ENCODE measurements at regions of chr4 and their contacts with region 1.

Region 1: DNA sequence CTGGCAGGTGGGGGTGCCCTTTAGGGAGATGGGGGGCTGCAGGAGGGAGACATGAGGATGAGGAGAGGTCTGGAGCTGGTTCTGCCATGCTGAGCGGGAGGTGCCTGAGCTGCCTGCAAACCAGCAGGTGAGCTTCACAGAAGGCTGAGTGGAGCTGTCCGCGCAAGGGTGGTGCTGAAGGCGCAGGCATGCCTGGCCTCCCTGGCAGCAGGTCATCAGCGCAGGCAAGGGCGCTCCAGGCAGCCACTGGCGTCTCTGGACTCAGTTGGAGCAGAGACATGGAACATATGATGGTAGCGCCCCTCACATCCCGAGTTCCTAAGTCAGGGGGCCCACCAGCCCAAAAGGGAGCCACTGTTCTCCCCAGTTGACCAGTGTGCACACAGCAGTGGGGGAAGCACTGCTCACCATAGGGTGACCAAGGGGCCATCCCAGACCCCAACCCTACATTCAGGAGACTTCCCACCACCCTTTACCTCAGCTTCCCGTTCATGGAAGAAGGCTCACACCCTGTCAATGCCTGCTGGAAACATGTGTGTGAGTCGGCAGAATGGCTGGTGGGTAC is 25.9 kb downstream of the ADRA2C start:
- DNase-seq: peak; percentile 29
- H3K4me3 ChIP-seq: no peak overlapping the region
- H3K27ac ChIP-seq: no peak overlapping the region
- H3K4me1 ChIP-seq: no peaks in the 10 kb centered on the region
- H3K27me3 ChIP-seq: no peaks in the 10 kb centered on the region
- CTCF ChIP-seq: no peak

Region 2: GRCh38 chr4:3387943-3388361 is 404.1 kb before region 1 on chr4:
- CTCF ChIA-PET with region 1: no interaction called
- dilution Hi-C with region 1: no loop called
- in situ Hi-C with region 1: no loop called
- intact Hi-C with region 1: no loop called
- DNase-seq: peak; percentile 88
- H3K4me3 ChIP-seq: peak overlapping the region; percentile 73 to 85 (median 81)
- H3K27ac ChIP-seq: peak overlapping the region; percentile 83
- H3K4me1 ChIP-seq: peaks cover 33% of the 10 kb centered on the region
- H3K27me3 ChIP-seq: no peaks in the 10 kb centered on the region
- CTCF ChIP-seq: no peak

Region 3: GRCh38 chr4:3732076-3733028 is 59.7 kb before region 1 on chr4:
- CTCF ChIA-PET with region 1: no interaction called
- dilution Hi-C with region 1: loop called (anchors 10 kb)
- in situ Hi-C with region 1: no loop called
- intact Hi-C with region 1: no loop called
- DNase-seq: no peak
- H3K4me3 ChIP-seq: no peak overlapping the region
- H3K27ac ChIP-seq: no peak overlapping the region
- H3K4me1 ChIP-seq: no peaks in the 10 kb centered on the region
- H3K27me3 ChIP-seq: no peaks in the 10 kb centered on the region
- CTCF ChIP-seq: no peak

Region 4: GRCh38 chr4:3868211-3869173 is 76.4 kb after region 1 on chr4:
- CTCF ChIA-PET with region 1: no interaction called
- dilution Hi-C with region 1: loop called (anchors 10 kb)
- in situ Hi-C with region 1: no loop called
- intact Hi-C with region 1: no loop called
- DNase-seq: no peak
- H3K4me3 ChIP-seq: no peak overlapping the region
- H3K27ac ChIP-seq: no peak overlapping the region
- H3K4me1 ChIP-seq: no peaks in the 10 kb centered on the region
- H3K27me3 ChIP-seq: peaks cover 17% of the 10 kb centered on the region
- CTCF ChIP-seq: no peak